Psoas muscle (tissue), 8 donors: ENCODE measurements at regions of chr3 and their contacts with region 1.

Region 1: DNA sequence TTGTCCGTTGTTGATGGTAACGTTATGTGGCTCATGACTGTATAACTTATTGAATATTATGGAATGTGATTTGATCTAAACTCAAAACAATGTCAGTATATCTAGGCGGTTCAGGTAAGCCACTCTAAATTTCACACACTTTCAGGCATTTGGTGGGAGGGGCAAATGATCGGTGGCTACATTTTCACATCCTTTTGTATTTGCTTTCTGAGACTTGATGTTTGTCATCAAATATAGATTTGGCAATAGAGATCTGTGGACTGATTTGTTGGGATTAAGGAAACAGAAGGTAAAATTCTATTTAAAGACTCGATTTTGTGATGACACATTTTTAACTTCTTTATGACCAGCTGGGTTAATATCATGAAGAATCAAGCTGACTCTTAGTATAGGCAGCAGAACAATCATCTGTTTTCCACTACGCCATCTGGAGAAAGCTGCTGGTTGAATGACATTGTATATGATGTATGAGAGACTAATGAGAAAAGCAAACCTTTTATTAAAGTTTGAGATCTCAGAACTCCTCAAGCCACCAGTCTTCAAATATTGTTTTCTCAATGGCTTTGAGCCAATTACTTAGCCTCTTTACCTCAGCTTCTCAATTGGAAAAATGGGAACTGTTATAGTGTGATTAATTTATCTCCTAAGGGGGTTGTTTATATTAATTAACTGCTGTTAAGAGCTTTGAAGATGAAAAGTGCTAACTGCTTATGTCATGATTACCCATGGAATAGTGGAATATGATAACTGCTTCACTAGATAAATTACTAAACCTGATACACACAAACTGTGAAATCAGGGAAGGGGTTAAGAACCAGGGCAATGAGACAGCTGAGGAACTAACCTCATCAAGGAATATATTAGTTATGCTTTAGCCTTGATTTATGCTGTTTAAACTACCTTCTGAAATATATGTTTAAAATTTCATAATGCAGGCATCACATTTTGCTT is 329.9 kb downstream of the SOX2 start:
- DNase-seq: no peak
- ATAC-seq: no peak
- H3K4me3 ChIP-seq: no peak overlapping the region
- H3K27ac ChIP-seq: no peak overlapping the region
- H3K4me1 ChIP-seq: no peaks in the 10 kb centered on the region
- H3K27me3 ChIP-seq: no peaks in the 10 kb centered on the region
- CTCF ChIP-seq: no peak

Region 2: DNA sequence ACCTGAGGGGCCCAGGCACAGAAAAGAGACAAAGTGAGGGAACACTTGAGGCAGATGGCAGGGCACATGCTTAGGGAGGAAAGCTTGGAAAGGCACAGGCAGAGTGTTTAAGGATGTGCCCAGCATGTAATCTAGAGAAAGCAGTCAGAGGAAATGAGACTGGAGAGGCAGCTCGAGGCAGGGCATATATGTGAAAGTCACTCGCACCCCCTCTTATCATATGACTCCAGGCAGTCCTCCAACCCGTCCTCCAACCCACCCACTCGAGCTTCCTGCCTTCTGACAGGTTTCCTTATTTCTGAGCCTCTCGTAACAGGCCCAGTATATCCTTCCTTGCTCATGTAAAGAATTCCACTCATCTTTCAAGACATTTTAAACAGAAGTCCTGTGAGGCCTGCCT is 35.9 kb before region 1 on chr3:
- intact Hi-C with region 1: loop called in 1 of 2 experiments (anchors 2 kb)
- DNase-seq: no peak
- ATAC-seq: no peak
- H3K4me3 ChIP-seq: no peak overlapping the region
- H3K27ac ChIP-seq: no peak overlapping the region
- H3K4me1 ChIP-seq: no peaks in the 10 kb centered on the region
- H3K27me3 ChIP-seq: no peaks in the 10 kb centered on the region
- CTCF ChIP-seq: no peak

Region 3: GRCh38 chr3:182027366-182027765 is 14.2 kb before region 1 on chr3:
- intact Hi-C with region 1: no loop called
- DNase-seq: no peak
- ATAC-seq: no peak
- H3K4me3 ChIP-seq: no peak overlapping the region
- H3K27ac ChIP-seq: no peak overlapping the region
- H3K4me1 ChIP-seq: no peaks in the 10 kb centered on the region
- H3K27me3 ChIP-seq: no peaks in the 10 kb centered on the region
- CTCF ChIP-seq: no peak

Region 4: GRCh38 chr3:182501856-182502255 is 460.2 kb after region 1 on chr3:
- intact Hi-C with region 1: no loop called
- DNase-seq: no peak
- ATAC-seq: no peak
- H3K4me3 ChIP-seq: no peak overlapping the region
- H3K27ac ChIP-seq: no peak overlapping the region
- H3K4me1 ChIP-seq: no peaks in the 10 kb centered on the region
- H3K27me3 ChIP-seq: no peaks in the 10 kb centered on the region
- CTCF ChIP-seq: no peak